Posterior cingulate gyrus (tissue), 11 donors: ENCODE measurements at regions of chr11 and their contacts with region 1.

Region 1: DNA sequence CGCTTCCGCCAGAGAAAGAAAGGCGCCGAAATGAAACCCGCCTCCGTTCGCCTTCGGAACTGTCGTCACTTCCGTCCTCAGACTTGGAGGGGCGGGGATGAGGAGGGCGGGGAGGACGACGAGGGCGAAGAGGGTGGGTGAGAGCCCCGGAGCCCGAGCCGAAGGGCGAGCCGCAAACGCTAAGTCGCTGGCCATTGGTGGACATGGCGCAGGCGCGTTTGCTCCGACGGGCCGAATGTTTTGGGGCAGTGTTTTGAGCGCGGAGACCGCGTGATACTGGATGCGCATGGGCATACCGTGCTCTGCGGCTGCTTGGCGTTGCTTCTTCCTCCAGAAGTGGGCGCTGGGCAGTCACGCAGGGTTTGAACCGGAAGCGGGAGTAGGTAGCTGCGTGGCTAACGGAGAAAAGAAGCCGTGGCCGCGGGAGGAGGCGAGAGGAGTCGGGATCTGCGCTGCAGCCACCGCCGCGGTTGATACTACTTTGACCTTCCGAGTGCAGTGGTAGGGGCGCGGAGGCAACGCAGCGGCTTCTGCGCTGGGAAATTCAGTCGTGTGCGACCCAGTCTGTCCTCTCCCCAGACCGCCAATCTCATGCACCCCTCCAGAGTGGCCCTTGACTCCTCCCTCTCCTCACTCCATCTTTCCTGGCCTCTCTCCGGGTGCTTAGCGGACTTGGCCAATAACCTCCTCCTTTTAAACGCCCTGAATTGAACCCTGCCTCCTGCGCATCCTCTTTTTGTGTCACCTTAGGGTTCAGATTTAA is at the start of gene ATM:
- DNase-seq: peak; percentile 99 to 100 (median 99)

Region 2: DNA sequence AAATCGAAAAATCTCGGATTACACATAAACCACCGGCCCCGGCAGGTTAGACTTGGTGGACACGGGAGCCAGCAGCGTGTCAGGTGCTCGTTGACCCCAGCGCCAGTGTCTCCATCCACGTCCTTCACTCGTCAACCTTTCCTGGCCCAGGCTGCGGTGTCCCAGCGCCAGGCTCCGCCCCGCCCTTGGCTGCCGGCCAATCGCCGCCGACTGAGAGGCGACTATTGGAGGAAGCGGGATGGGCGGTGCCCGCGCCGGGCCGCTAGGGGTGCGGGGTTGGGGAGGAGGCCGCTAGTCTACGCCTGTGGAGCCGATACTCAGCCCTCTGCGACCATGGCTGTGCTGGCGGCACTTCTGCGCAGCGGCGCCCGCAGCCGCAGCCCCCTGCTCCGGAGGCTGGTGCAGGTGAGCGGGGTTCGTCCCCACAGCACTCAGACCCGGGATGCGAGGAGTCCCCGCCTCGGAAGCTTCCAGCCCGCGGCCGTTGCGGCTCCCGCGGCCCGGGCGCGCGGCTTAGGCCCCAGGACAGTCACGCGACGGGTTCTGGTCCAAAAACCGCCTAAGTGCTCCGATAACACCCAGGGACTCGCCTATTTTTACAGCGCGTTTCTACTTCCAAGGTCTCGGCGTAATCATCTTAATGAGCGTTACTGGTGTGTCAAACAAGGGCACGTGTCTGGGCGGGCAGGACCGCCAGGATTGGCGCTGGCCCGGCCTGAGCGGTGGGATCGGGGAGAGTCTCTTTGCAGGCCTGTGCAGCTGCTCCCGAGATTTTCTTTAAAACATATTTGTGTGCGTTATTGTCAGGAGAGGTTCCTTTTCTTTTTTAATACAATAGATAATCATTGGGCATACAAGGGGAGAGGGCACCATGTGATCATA is 101.4 kb before region 1 on chr11 and contains the start of gene ACAT1:
- intact Hi-C with region 1: loop called (anchors 5 kb)
- DNase-seq: peak; percentile 93 to 99 (median 96)

Region 3: DNA sequence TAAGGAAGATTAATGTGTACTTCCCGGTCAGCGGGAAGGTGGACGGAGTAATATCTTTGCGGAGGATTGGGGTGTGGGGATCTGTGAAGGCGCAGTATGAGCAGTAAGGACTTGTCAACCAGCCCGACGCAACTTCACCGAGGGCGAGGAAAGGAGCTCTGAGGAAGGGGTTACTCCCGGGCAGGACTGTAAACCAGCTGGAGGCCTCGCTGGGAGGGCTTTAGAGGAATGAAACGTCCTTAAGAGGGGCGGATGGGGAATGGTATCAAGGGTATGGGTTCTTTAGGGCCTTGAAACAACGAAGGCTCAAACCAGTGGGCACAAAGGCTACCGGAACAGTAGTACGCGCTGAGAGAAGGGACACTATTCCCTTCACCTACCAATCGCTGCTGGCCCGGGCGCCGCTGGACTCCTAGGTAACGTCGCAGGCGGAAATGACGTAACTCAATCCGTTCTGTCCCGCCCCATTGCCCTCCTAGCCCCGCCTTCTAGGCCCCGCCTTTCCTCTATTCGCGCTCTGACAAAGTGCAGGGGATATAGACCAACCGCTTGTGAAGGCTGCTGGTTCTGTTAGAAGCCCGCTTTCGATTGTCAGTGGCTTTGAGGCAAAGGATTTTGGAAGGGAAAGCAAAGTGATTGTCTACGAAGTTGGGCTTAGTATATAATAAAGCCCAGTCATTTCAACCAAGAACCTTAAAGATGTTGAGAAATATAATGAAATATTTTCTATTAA is 244.4 kb after region 1 on chr11 and contains the start of gene C11orf65:
- intact Hi-C with region 1: loop called (anchors 1 kb)
- DNase-seq: peak; percentile 93 to 99 (median 97)

Region 4: GRCh38 chr11:108647701-108648527 is 425.0 kb after region 1 on chr11:
- intact Hi-C with region 1: loop called (anchors 5 kb)
- DNase-seq: peak in 8 of 10 donors; percentile 20 to 90 (median 58)

Region 5: DNA sequence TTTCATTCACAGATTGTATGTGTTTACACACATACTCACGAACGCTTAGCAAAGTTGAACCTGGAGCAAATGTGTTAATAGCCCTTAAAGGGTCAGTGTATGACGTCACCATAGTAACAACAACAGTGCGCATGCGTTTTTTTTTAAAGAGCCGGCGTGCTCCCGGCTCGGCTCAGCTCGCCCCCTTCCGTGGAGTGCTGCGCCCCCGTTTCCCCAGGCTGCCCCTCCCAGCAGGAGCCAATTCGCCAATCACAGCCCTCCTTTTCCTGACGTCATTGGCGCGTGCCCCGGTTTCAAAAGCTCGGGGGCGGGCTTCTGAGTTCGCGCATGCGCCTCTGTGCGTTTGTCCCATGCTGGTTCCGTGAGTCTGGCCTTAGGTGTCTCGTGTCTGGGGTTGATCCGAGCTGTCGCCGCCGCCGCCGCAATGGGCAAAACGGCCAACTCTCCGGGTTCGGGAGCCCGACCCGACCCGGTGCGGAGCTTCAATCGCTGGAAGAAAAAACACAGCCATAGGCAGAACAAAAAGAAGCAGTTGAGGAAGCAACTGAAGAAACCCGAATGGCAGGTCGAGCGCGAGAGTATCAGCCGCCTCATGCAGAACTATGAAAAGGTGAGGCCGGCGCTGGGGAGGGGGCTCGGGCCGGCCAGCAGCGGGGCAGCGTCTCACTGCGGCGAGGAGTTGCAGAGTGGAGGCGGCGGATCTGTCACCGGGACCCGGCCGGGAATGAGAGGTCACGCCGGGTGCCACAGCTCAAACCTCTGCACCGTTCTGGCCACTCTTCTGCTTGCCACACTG is 442.1 kb after region 1 on chr11 and contains the start of gene DDX10:
- intact Hi-C with region 1: loop called (anchors 5 kb)
- DNase-seq: peak; percentile 95 to 100 (median 98)

Region 6: GRCh38 chr11:108871152-108871551 is 648.3 kb after region 1 on chr11:
- intact Hi-C with region 1: no loop called
- DNase-seq: peak in 2 of 10 donors; percentile 14 to 75